ENCODE measurements at regions of chr11 and their contacts with region 1.

Region 1: GRCh38 chr11:114280696-114281095 is 15.5 kb upstream of the NNMT start:
- DNase-seq: peak; percentile 93
- ATAC-seq: peak; percentile 72
- H3K4me3 ChIP-seq: no peak overlapping the region
- H3K27ac ChIP-seq: peak overlapping the region; percentile 43
- H3K4me1 ChIP-seq: peaks cover 38% of the 10 kb centered on the region
- H3K27me3 ChIP-seq: peaks cover 7% of the 10 kb centered on the region; the same call in 1 of the 2 replicates
- CTCF ChIP-seq: peak; percentile 91

Region 2: DNA sequence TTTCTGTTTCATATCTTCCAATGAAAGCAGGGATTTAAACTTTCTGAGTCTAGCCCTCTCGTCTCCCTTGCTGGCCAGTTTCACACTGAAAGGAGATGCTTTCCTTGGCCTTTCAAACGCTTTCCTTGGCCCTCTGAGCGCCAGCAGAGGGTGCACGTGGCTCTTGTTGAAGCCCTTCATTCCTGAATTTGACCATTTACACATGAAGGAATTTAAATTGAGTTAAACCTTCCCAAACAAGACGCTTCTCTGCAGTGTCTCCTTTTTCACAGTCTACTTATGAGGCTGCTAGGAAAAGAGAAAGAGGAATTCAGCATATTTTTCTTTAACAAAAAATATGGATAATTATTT is 37.1 kb after region 1 on chr11:
- CTCF ChIA-PET with region 1: no interaction called
- POLR2A ChIA-PET with region 1: no interaction called
- intact Hi-C with region 1: loop called (anchors 1 kb)
- DNase-seq: peak; percentile 70
- ATAC-seq: peak; percentile 37; the same call in 1 of the 2 replicates
- H3K4me3 ChIP-seq: no peak overlapping the region
- H3K27ac ChIP-seq: no peak overlapping the region
- H3K4me1 ChIP-seq: peaks cover 38% of the 10 kb centered on the region
- H3K27me3 ChIP-seq: no peaks in the 10 kb centered on the region
- CTCF ChIP-seq: peak; percentile 81

Region 3: DNA sequence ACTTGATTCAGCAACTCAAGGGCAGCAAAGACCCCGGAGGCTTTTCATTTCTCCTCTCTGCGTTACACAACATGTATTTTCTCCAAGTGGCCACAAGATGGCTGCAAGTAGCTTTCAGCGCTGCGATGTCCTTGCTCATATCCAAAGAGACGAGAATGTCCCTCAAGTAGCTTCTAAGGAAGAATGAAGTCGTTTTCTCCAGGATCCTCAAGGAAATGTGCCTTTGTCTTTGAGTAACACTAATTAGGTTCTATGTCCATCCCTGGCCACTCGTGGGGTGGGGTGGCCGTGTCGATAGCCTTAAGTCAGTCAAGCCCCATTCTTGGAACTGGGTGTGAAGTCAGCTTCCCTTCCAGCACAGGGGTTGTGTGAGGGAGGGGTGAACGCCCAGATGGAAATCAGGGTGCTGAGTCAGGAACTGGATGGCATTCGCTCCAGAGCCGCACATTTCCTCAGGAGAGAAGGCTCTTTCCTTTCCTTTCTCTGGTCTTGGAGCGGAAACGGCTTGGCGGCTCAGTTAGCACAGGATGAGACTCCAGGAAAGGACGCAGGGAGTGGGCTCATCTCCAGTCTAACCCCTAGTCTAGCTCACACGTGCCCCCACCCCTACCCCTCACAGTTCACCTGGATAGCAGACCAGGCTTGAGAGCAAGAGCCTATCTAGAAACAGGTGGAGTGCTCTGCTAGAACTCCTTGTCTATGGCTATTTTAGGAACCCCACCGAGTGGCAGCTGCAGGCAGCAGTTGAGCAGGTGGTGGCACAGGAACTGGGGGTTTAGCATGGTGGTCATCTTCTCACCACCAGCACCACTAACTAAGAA is 59.8 kb after region 1 on chr11:
- CTCF ChIA-PET with region 1: no interaction called
- POLR2A ChIA-PET with region 1: no interaction called
- intact Hi-C with region 1: loop called (anchors 1 kb)
- DNase-seq: peak; percentile 85
- ATAC-seq: peak; percentile 92
- H3K4me3 ChIP-seq: peak overlapping the region; percentile 54; the same call in 1 of the 2 replicates
- H3K27ac ChIP-seq: no peak overlapping the region
- H3K4me1 ChIP-seq: peaks cover 6% of the 10 kb centered on the region; the same call in 1 of the 2 replicates
- H3K27me3 ChIP-seq: no peaks in the 10 kb centered on the region
- CTCF ChIP-seq: peak; percentile 94

Region 4: GRCh38 chr11:114348200-114349191 is 67.8 kb after region 1 on chr11:
- CTCF ChIA-PET with region 1: no interaction called
- POLR2A ChIA-PET with region 1: no interaction called
- intact Hi-C with region 1: loop called (anchors 2 kb)
- DNase-seq: peak; percentile 92
- ATAC-seq: peak; percentile 89
- H3K4me3 ChIP-seq: no peak overlapping the region
- H3K27ac ChIP-seq: no peak overlapping the region
- H3K4me1 ChIP-seq: peaks cover 27% of the 10 kb centered on the region
- H3K27me3 ChIP-seq: no peaks in the 10 kb centered on the region
- CTCF ChIP-seq: peak; percentile 74

Region 5: GRCh38 chr11:114439229-114440120 is 158.8 kb after region 1 on chr11 and contains the start of gene REXO2:
- CTCF ChIA-PET with region 1: no interaction called
- POLR2A ChIA-PET with region 1: no interaction called
- intact Hi-C with region 1: loop called (anchors 2 kb)
- DNase-seq: peak; percentile 99
- ATAC-seq: peak; percentile 94
- H3K4me3 ChIP-seq: peak within 1 kb of the TSS; percentile 97
- H3K27ac ChIP-seq: peak within 1 kb of the TSS; percentile 33
- H3K4me1 ChIP-seq: peaks cover 31% of the 10 kb centered on the region
- H3K27me3 ChIP-seq: no peaks in the 10 kb centered on the region
- CTCF ChIP-seq: peak; percentile 32; the same call in 1 of the 2 replicates
- total RNA-seq, gene REXO2: 145 and 181 TPM in 2 replicates

Region 6: GRCh38 chr11:114586797-114587196 is 306.1 kb after region 1 on chr11:
- CTCF ChIA-PET with region 1: no interaction called
- POLR2A ChIA-PET with region 1: no interaction called
- intact Hi-C with region 1: loop called (anchors 10 kb)
- DNase-seq: peak; percentile 33
- ATAC-seq: peak; percentile 43; the same call in 1 of the 2 replicates
- H3K4me3 ChIP-seq: no peak overlapping the region
- H3K27ac ChIP-seq: no peak overlapping the region
- H3K4me1 ChIP-seq: no peaks in the 10 kb centered on the region
- H3K27me3 ChIP-seq: no peaks in the 10 kb centered on the region
- CTCF ChIP-seq: peak; percentile 56

Measured in PC-3 (cell line).